OCI-LY7 (cell line): ENCODE measurements at regions of chr6 and their contacts with region 1.

Region 1: GRCh38 chr6:142952614-142953013 is 7.6 kb upstream of the HIVEP2 start:
- DNase-seq: peak; percentile 68
- H3K4me3 ChIP-seq: no peak overlapping the region
- H3K27ac ChIP-seq: no peak overlapping the region
- H3K4me1 ChIP-seq: peaks cover 33% of the 10 kb centered on the region
- CTCF ChIP-seq: no peak

Region 2: DNA sequence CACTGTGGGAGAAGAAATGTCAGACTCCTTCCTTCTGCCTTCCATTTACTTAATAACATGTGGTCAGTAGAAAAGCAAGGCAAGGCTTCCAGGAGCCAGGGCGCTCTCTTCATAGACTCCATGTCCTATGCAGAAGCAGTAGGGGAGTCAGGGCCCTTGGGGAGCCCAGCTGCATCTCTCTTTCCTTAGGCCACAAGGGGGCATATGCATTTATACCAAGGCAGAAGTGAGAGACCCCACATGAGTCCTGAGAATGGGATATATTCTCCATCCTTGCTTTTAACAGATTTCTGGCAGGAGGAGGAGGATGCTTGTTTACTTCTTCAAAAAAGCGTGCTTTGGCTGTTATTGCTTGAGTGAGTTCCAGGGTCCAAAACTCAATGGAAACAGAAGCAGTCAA is 206.1 kb before region 1 on chr6:
- CTCF ChIA-PET with region 1: no interaction called
- POLR2A ChIA-PET with region 1: no interaction called
- intact Hi-C with region 1: loop called (anchors 5 kb)
- DNase-seq: peak; percentile 67
- H3K4me3 ChIP-seq: no peak overlapping the region
- H3K27ac ChIP-seq: no peak overlapping the region
- H3K4me1 ChIP-seq: no peaks in the 10 kb centered on the region
- CTCF ChIP-seq: peak; percentile 81